ENCODE measurements at regions of chr2 and their contacts with region 1.

Region 1: DNA sequence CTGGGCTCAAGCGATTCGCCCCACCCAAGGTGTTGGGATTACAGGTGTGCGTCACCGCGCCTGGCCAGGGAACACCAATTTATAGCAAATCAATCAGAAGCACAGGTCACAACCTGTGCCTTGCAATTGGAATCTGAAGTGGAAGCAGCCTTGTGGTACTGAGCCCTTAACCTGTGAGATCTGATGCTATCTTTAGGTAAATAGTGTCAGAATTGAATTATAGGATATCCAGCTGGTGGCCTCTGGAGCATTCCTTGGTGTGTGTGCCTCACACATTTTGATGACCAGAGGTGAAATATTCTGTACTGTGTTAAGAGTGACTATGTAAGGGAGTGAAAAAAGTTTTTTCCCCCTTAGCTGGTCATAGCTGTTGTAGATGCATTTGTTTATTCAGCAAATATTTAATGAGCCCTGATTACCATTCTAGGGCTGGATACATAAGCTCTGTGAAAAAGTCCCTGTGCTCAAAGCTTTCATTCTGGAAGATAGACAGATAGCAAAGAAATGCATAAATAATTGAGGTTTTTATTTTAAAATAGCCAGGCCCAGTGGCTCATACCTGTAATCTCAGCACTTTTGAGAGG is 10.8 kb downstream of the TTLL4 start:
- H3K4me3 ChIP-seq: no peak overlapping the region
- H3K27ac ChIP-seq: no peak overlapping the region
- H3K4me1 ChIP-seq: peaks cover 41% of the 10 kb centered on the region
- CTCF ChIP-seq: no peak

Region 2: GRCh38 chr2:218557941-218558340 is 163.5 kb before region 1 on chr2:
- CTCF ChIA-PET with region 1: no interaction called
- POLR2A ChIA-PET with region 1: no interaction called
- H3K4me3 ChIP-seq: no peak overlapping the region
- H3K27ac ChIP-seq: no peak overlapping the region
- H3K4me1 ChIP-seq: no peaks in the 10 kb centered on the region
- CTCF ChIP-seq: no peak

Region 3: GRCh38 chr2:218733171-218734021 is 12.0 kb after region 1 on chr2:
- CTCF ChIA-PET with region 1: interaction called, 11 read pairs
- POLR2A ChIA-PET with region 1: no interaction called
- H3K4me3 ChIP-seq: no peak overlapping the region
- H3K27ac ChIP-seq: no peak overlapping the region
- H3K4me1 ChIP-seq: peaks cover 6% of the 10 kb centered on the region
- CTCF ChIP-seq: no peak

Region 4: GRCh38 chr2:218814540-218815243 is 93.3 kb after region 1 on chr2:
- CTCF ChIA-PET with region 1: no interaction called
- POLR2A ChIA-PET with region 1: no interaction called
- H3K4me3 ChIP-seq: no peak overlapping the region
- H3K27ac ChIP-seq: no peak overlapping the region
- H3K4me1 ChIP-seq: no peaks in the 10 kb centered on the region
- CTCF ChIP-seq: no peak

Measured in HEK293 (cell line).